SK-N-SH (cell line): ENCODE measurements at regions of chr18 and their contacts with region 1.

Region 1: DNA sequence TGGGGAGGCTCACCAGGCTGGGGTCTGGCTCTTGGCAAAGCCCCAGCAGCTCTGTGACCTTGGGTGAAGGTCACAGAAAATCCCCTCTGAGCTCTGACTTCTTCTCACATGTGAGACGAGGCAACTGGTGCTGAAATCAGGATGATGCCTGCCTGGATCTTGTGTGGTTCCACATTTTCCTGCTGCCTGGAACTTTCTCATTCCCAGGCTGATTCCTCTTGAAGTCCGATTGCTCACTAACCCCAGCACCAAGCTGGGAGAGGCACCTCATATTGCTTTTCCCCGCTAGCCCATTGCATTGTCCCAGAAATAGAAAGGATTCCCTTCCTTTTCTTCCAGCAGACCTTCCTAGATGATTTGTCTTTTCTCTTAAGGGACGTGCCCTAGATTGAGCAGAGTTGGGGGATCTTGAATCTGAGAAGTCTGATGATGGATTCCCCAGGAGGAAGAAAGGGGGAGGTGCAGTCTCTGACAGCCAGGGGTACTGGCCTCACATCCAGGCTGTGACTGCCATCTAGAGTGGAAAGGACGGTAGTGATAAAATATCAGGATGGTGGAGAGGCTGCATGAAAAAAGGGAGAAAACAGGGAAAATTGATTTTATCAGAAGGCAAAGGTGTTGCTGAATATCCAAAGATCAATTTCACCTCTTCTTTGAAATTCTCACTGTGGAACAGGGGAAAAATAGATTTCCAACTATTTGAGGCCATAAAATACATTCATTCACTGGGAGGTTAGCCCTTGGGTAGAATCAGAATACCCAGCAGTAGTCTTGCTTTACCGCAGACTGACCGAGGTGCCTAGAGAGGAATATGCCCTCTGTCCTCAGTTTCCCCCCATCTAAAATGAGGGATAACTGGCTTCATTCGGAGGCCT is 96.3 kb downstream of the FAM210A start:
- DNase-seq: peak; percentile 91
- H3K4me3 ChIP-seq: peak overlapping the region in 1 of 2 experiments; percentile 1; a peak in 1 of 4 replicates
- H3K27ac ChIP-seq: peak overlapping the region in 1 of 2 experiments; percentile 76; a peak in 2 of 4 replicates
- H3K4me1 ChIP-seq: peaks cover 0 to 24% of the 10 kb centered on the region in 2 experiments; a peak in 2 of 4 replicates
- H3K27me3 ChIP-seq: no peaks in the 10 kb centered on the region
- CTCF ChIP-seq: peak; percentile 80
- EP300 ChIP-seq: no peak
- RAD21 ChIP-seq: peak; percentile 96

Region 2: GRCh38 chr18:13159579-13159978 is 470.5 kb before region 1 on chr18:
- CTCF ChIA-PET with region 1: interaction called, 13 read pairs
- POLR2A ChIA-PET with region 1: no interaction called
- DNase-seq: peak; percentile 73
- H3K4me3 ChIP-seq: peak overlapping the region in 1 of 2 experiments; percentile 39; a peak in 1 of 4 replicates
- H3K27ac ChIP-seq: no peak overlapping the region
- H3K4me1 ChIP-seq: no peaks in the 10 kb centered on the region; a peak in 1 of 4 replicates
- H3K27me3 ChIP-seq: no peaks in the 10 kb centered on the region
- CTCF ChIP-seq: peak; percentile 77
- EP300 ChIP-seq: no peak
- RAD21 ChIP-seq: peak; percentile 78

Region 3: DNA sequence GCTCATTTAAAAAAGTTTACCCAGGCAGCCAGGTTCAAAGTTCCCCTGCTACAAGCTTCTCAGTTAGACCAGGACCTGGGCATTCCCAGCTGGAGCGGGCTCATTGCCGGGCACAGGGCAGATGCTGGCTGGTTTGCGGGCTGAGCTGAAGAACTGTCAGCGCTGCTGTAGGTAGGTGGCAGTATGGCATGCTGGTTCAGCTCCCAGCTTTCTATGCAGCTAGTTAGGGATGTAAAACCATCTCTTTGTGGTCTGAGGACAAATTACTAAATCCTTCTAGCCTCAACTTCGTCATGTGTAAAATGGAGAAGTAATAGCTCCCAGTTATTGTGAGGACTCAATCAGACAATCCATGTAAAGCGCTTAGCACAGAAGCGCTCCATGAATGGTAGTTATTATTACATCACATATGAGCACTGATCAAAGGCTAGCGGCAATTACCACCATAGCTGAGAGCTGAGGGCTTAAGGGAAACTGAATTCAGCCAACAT is 413.9 kb before region 1 on chr18:
- CTCF ChIA-PET with region 1: interaction called, 21 read pairs
- POLR2A ChIA-PET with region 1: no interaction called
- DNase-seq: peak; percentile 81
- H3K4me3 ChIP-seq: no peak overlapping the region
- H3K27ac ChIP-seq: peak overlapping the region in 1 of 2 experiments; percentile 25; a peak in 2 of 4 replicates
- H3K4me1 ChIP-seq: peaks cover 0 to 20% of the 10 kb centered on the region in 2 experiments; a peak in 2 of 4 replicates
- H3K27me3 ChIP-seq: peaks cover 23% of the 10 kb centered on the region; the same call in 1 of the 2 replicates
- CTCF ChIP-seq: peak; percentile 73
- EP300 ChIP-seq: no peak
- RAD21 ChIP-seq: peak; percentile 93

Region 4: DNA sequence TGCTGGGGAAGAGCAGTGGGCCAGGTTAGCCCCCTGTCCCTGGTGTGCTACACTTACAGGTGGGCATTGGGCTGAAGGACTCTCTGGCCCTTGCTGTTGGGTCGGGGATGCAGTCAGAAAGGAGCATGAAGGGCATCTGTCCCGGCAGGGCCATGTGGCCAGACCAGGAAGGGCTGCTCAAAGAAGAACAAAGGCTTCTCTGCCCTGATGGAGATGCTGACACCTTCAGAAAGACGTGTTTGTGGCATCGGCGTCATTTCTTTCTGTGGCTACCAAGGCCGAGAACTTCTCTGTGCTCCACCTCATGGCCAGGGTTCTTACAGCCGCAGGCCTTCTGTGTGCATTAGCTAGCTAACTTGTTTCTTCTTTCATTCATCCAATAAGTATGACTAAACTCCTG is 142.8 kb before region 1 on chr18:
- CTCF ChIA-PET with region 1: no interaction called
- POLR2A ChIA-PET with region 1: no interaction called
- DNase-seq: no peak
- H3K4me3 ChIP-seq: no peak overlapping the region
- H3K27ac ChIP-seq: no peak overlapping the region; a peak in 1 of 4 replicates
- H3K4me1 ChIP-seq: peaks cover 0 to 49% of the 10 kb centered on the region in 2 experiments; a peak in 1 of 4 replicates
- H3K27me3 ChIP-seq: no peaks in the 10 kb centered on the region
- CTCF ChIP-seq: no peak
- EP300 ChIP-seq: no peak
- RAD21 ChIP-seq: no peak

Region 5: GRCh38 chr18:13500227-13500865 is 129.7 kb before region 1 on chr18:
- CTCF ChIA-PET with region 1: no interaction called
- POLR2A ChIA-PET with region 1: no interaction called
- DNase-seq: no peak
- H3K4me3 ChIP-seq: no peak overlapping the region
- H3K27ac ChIP-seq: peak overlapping the region; percentile 68 to 97
- H3K4me1 ChIP-seq: peaks cover 13 to 43% of the 10 kb centered on the region in 2 experiments
- H3K27me3 ChIP-seq: no peaks in the 10 kb centered on the region
- CTCF ChIP-seq: no peak
- EP300 ChIP-seq: no peak
- RAD21 ChIP-seq: no peak

Region 6: GRCh38 chr18:13558124-13558523 is 72.0 kb before region 1 on chr18:
- CTCF ChIA-PET with region 1: interaction called, 79 read pairs
- POLR2A ChIA-PET with region 1: no interaction called
- DNase-seq: peak; percentile 83
- H3K4me3 ChIP-seq: peak overlapping the region in 1 of 2 experiments; percentile 11; a peak in 1 of 4 replicates
- H3K27ac ChIP-seq: no peak overlapping the region
- H3K4me1 ChIP-seq: peaks cover 0 to 6% of the 10 kb centered on the region in 2 experiments; a peak in 1 of 4 replicates
- H3K27me3 ChIP-seq: no peaks in the 10 kb centered on the region
- CTCF ChIP-seq: peak; percentile 68
- EP300 ChIP-seq: no peak
- RAD21 ChIP-seq: peak; percentile 89

Region 7: GRCh38 chr18:13585379-13586153 is 44.5 kb before region 1 on chr18:
- CTCF ChIA-PET with region 1: interaction called, 11 read pairs
- POLR2A ChIA-PET with region 1: no interaction called
- DNase-seq: peak; percentile 63
- H3K4me3 ChIP-seq: no peak overlapping the region
- H3K27ac ChIP-seq: peak overlapping the region in 1 of 2 experiments; percentile 94; a peak in 2 of 4 replicates
- H3K4me1 ChIP-seq: peaks cover 0 to 41% of the 10 kb centered on the region in 2 experiments; a peak in 2 of 4 replicates
- H3K27me3 ChIP-seq: no peaks in the 10 kb centered on the region
- CTCF ChIP-seq: no peak
- EP300 ChIP-seq: peak in 1 of 2 experiments; percentile 71; a peak in 2 of 4 replicates
- RAD21 ChIP-seq: no peak

Region 8: DNA sequence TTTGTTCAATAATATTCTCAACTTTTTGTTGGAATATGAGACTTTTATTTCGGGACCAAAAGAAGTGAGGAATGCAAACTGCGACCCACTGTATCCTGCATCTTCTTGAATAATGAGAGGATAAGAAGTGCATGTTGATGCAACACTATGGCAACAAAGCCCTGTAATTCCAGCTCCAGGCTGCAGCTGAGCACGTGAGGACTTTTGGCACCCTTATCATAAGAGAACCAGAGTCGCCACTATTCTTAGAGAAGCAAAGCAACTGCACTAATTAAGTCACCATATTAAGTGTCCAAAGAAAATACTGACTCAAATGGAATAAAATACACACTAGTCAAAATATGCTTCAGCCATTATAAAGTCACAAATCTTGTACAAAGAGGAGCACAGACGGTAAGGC is 30.4 kb after region 1 on chr18:
- CTCF ChIA-PET with region 1: no interaction called
- POLR2A ChIA-PET with region 1: no interaction called
- DNase-seq: no peak
- H3K4me3 ChIP-seq: no peak overlapping the region
- H3K27ac ChIP-seq: no peak overlapping the region
- H3K4me1 ChIP-seq: no peaks in the 10 kb centered on the region; a peak in 1 of 4 replicates
- H3K27me3 ChIP-seq: no peaks in the 10 kb centered on the region
- CTCF ChIP-seq: no peak
- EP300 ChIP-seq: no peak
- RAD21 ChIP-seq: no peak

Region 9: DNA sequence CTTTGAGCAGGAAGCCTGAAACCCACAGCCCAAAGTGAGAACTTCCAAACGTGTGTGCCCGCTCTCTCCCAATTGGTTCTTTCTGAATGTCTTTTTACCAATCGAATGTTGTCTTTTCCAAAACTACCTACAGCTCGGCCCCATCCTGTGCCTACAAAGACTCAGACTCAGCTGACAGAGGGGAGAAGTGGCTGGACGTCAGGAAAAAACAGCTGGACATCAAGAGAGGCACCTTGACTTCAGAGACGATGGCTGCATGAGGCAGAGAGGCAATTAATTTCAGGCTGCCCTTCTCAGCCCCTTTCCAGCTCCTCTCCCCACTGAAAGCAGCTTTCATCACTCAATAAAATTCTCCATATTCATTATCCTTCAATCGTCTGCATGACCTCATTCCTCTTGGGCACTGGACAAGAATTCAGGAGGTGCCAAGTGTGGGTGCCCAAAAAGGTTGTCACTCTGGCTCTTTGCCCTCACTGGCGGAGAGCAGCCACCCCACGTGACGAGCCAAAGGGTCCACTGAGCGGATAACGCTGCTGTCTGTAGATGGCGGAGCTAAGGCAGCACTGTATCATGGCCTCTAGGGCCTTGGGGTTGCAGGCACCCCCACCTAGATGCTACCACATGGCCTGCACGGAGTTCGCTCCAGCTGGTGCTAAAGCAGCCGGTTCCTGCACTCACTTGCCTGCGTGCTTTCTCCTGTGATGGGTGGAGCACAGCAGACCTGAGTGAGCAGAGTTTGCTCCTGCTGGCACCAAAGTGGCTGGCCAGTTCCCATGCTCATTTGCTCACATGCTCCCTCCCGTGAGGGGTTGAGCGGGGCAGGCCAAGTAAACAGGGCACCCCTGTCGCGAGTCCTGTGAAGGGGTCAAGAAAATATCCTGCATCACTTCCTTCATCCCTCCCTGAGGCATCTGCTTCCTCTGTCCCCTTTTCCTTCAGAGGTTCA is 58.4 kb after region 1 on chr18:
- CTCF ChIA-PET with region 1: no interaction called
- POLR2A ChIA-PET with region 1: no interaction called
- DNase-seq: no peak
- H3K4me3 ChIP-seq: no peak overlapping the region
- H3K27ac ChIP-seq: no peak overlapping the region
- H3K4me1 ChIP-seq: no peaks in the 10 kb centered on the region; a peak in 2 of 4 replicates
- H3K27me3 ChIP-seq: no peaks in the 10 kb centered on the region
- CTCF ChIP-seq: no peak
- EP300 ChIP-seq: no peak
- RAD21 ChIP-seq: no peak